ENCODE measurements at regions of chr20 and their contacts with region 1.

Region 1: GRCh38 chr20:49936153-49937027 is at the start of gene RNF114:
- DNase-seq: no peak
- ATAC-seq: peak; percentile 91
- H3K4me3 ChIP-seq: peak within 1 kb of the TSS; percentile 97 to 98
- H3K27ac ChIP-seq: peak within 1 kb of the TSS; percentile 94
- H3K4me1 ChIP-seq: peaks cover 16% of the 10 kb centered on the region
- H3K27me3 ChIP-seq: no peaks in the 10 kb centered on the region
- CTCF ChIP-seq: no peak
- total RNA-seq, gene RNF114: 70.0 TPM

Region 2: GRCh38 chr20:49460916-49461315 is 475.5 kb before region 1 on chr20:
- CTCF ChIA-PET with region 1: no interaction called
- POLR2A ChIA-PET with region 1: interaction called, 15 read pairs
- in situ Hi-C with region 1: no loop called
- intact Hi-C with region 1: no loop called
- DNase-seq: no peak
- ATAC-seq: no peak; the same call in 1 of the 2 replicates
- H3K4me3 ChIP-seq: no peak overlapping the region
- H3K27ac ChIP-seq: no peak overlapping the region
- H3K4me1 ChIP-seq: no peaks in the 10 kb centered on the region
- H3K27me3 ChIP-seq: no peaks in the 10 kb centered on the region
- CTCF ChIP-seq: no peak

Region 3: DNA sequence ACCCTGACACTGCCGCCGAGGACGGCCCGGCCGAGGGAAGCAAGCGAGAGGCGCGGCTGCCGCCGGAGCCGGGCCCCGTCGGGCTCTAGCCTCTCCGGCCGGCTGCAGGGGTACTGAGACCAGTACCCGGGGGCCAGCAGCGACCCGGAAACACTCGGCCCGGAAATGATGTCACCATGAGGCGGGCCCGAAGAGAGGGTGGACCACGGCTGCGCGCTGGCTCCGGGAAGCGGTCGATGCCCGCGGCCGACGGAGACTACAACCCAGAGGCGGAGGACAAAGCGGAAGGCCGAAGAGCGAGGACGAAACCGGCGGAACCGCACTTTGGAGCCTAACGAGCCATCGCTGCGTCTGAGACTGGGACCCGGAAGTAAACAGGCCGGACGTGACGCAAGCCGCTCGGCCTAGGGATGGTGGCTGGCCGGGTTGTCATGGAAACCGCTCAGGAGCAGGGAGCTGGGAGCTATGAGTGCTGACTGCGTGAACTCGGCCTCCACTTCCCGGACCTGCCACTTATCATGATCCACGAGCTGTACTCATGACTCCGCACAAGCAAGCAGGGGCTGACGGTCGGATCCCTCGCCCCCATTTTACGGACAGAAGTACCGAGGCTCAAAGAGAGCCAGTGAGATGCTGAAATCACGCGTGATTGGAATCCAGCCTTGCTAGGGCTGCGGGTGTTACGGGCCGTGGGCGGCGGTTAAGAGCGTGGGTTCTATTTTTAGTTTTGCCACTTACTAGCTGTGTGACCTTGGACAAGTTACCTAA is 20.8 kb before region 1 on chr20 and contains the start of gene SPATA2:
- CTCF ChIA-PET with region 1: no interaction called
- POLR2A ChIA-PET with region 1: interaction called, 12 read pairs
- in situ Hi-C with region 1: no loop called
- intact Hi-C with region 1: no loop called
- DNase-seq: peak; percentile 81
- ATAC-seq: peak; percentile 95
- H3K4me3 ChIP-seq: peak within 1 kb of the TSS; percentile 76 to 89
- H3K27ac ChIP-seq: peak within 1 kb of the TSS; percentile 95
- H3K4me1 ChIP-seq: peaks cover 15% of the 10 kb centered on the region
- H3K27me3 ChIP-seq: no peaks in the 10 kb centered on the region
- CTCF ChIP-seq: no peak
- total RNA-seq, gene SPATA2: 8.3 TPM